Activated CD4-positive, alpha-beta memory T cell treated with anti-CD3 and anti-CD28 coated beads for 36 hours (primary cell): ENCODE measurements at regions of chr13 and their contacts with region 1.

Region 1: GRCh38 chr13:101144808-101145419 is 271.4 kb downstream of the NALCN start:
- DNase-seq: no peak
- H3K4me3 Mint-ChIP-seq: no peak overlapping the region
- H3K27ac Mint-ChIP-seq: no peak overlapping the region
- H3K4me1 Mint-ChIP-seq: no peaks in the 10 kb centered on the region
- H3K27me3 Mint-ChIP-seq: peaks cover 22% of the 10 kb centered on the region

Region 2: DNA sequence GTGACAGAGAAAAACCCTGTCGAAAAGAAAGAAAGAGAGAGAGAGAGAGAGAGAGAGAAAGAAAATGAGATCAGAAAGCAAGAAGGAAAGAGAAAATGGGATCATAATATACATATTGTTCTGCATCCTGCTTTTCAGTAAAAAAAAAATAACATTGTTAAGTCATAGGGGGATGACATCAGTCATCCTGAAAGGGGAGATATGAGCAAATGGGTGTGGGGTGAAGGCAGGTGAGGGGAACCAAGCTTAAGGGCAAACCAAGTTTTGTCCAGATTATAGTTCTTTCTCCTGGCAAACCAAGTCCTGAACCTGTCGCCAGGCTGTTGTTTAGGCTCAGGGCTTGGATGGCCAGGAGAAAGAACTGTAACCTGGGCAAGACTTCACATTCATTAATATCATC is 377.7 kb before region 1 on chr13:
- CTCF ChIA-PET with region 1: no interaction called
- POLR2A ChIA-PET with region 1: no interaction called
- intact Hi-C with region 1: no loop called
- DNase-seq: no peak
- H3K4me3 Mint-ChIP-seq: no peak overlapping the region
- H3K27ac Mint-ChIP-seq: no peak overlapping the region
- H3K4me1 Mint-ChIP-seq: no peaks in the 10 kb centered on the region
- H3K27me3 Mint-ChIP-seq: peaks cover 1% of the 10 kb centered on the region

Region 3: GRCh38 chr13:101065329-101065728 is 79.6 kb before region 1 on chr13:
- CTCF ChIA-PET with region 1: no interaction called
- POLR2A ChIA-PET with region 1: no interaction called
- intact Hi-C with region 1: no loop called
- DNase-seq: no peak
- H3K4me3 Mint-ChIP-seq: no peak overlapping the region
- H3K27ac Mint-ChIP-seq: no peak overlapping the region
- H3K4me1 Mint-ChIP-seq: no peaks in the 10 kb centered on the region
- H3K27me3 Mint-ChIP-seq: peaks cover 7% of the 10 kb centered on the region

Region 4: GRCh38 chr13:101115762-101116171 is 29.1 kb before region 1 on chr13:
- CTCF ChIA-PET with region 1: no interaction called
- POLR2A ChIA-PET with region 1: no interaction called
- intact Hi-C with region 1: no loop called
- DNase-seq: no peak
- H3K4me3 Mint-ChIP-seq: no peak overlapping the region
- H3K27ac Mint-ChIP-seq: no peak overlapping the region
- H3K4me1 Mint-ChIP-seq: no peaks in the 10 kb centered on the region
- H3K27me3 Mint-ChIP-seq: peaks cover 2% of the 10 kb centered on the region

Region 5: GRCh38 chr13:101155920-101156319 is 11.0 kb after region 1 on chr13:
- CTCF ChIA-PET with region 1: interaction called, 44 read pairs
- POLR2A ChIA-PET with region 1: no interaction called
- intact Hi-C with region 1: no loop called
- DNase-seq: no peak
- H3K4me3 Mint-ChIP-seq: no peak overlapping the region
- H3K27ac Mint-ChIP-seq: no peak overlapping the region
- H3K4me1 Mint-ChIP-seq: no peaks in the 10 kb centered on the region
- H3K27me3 Mint-ChIP-seq: peaks cover 17% of the 10 kb centered on the region

Region 6: GRCh38 chr13:101514788-101515187 is 369.9 kb after region 1 on chr13:
- CTCF ChIA-PET with region 1: interaction called, 5 read pairs
- POLR2A ChIA-PET with region 1: no interaction called
- intact Hi-C with region 1: loop called (anchors 10 kb)
- DNase-seq: no peak
- H3K4me3 Mint-ChIP-seq: no peak overlapping the region
- H3K27ac Mint-ChIP-seq: no peak overlapping the region
- H3K4me1 Mint-ChIP-seq: peaks cover 12% of the 10 kb centered on the region
- H3K27me3 Mint-ChIP-seq: peaks cover 2% of the 10 kb centered on the region

Region 7: GRCh38 chr13:101942038-101942437 is 797.1 kb after region 1 on chr13:
- CTCF ChIA-PET with region 1: interaction called, 5 read pairs
- POLR2A ChIA-PET with region 1: no interaction called
- intact Hi-C with region 1: loop called (anchors 10 kb)
- DNase-seq: no peak
- H3K4me3 Mint-ChIP-seq: no peak overlapping the region
- H3K27ac Mint-ChIP-seq: no peak overlapping the region
- H3K4me1 Mint-ChIP-seq: no peaks in the 10 kb centered on the region
- H3K27me3 Mint-ChIP-seq: peaks cover 6% of the 10 kb centered on the region

Region 8: GRCh38 chr13:102460801-102461200 is 1315.9 kb after region 1 on chr13:
- CTCF ChIA-PET with region 1: interaction called, 12 read pairs
- POLR2A ChIA-PET with region 1: no interaction called
- intact Hi-C with region 1: loop called (anchors 1 kb)
- DNase-seq: no peak
- H3K4me3 Mint-ChIP-seq: no peak overlapping the region
- H3K27ac Mint-ChIP-seq: no peak overlapping the region
- H3K4me1 Mint-ChIP-seq: peaks cover 5% of the 10 kb centered on the region
- H3K27me3 Mint-ChIP-seq: peaks cover 11% of the 10 kb centered on the region